ENCODE measurements at regions of chr4 and their contacts with region 1.

Region 1: DNA sequence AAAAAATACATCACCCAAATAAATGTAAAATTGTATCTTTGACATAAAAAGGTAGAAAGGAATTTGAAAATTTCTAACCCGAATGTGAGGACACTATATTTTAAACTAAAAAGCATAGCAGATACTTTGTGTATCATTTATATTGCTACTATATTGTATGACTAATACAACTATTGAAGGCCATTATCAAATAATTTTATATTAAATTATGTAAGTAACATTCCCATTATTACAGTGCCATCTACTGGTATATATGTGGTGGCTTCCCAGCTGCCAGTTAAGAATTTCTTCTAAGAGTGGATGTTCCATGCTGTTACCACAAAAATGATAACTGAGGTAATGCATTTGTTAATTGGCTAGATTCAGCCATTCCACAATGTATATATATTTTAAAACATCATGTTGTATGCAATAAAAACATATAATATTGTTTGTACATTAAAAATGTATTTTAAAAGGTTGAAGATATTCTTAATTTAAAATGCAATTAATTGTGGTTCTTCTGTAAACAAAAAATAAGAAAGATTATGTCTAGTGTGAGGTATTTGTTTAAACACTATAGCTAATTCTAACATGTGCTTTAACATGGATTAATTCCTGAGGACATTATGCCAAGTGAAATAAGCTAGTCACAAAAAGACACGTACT is 65.3 kb downstream of the EGF start:
- DNase-seq: peak; percentile 70
- H3K4me3 ChIP-seq: no peak overlapping the region
- H3K27ac ChIP-seq: no peak overlapping the region
- H3K4me1 ChIP-seq: peaks cover 7% of the 10 kb centered on the region
- H3K27me3 ChIP-seq: no peaks in the 10 kb centered on the region
- CTCF ChIP-seq: peak; percentile 81

Region 2: GRCh38 chr4:109424093-109424841 is 553.7 kb before region 1 on chr4:
- CTCF ChIA-PET with region 1: interaction called, 7 read pairs
- POLR2A ChIA-PET with region 1: no interaction called
- intact Hi-C with region 1: loop called (anchors 2 kb)
- DNase-seq: no peak
- H3K4me3 ChIP-seq: no peak overlapping the region
- H3K27ac ChIP-seq: no peak overlapping the region
- H3K4me1 ChIP-seq: peaks cover 8% of the 10 kb centered on the region
- H3K27me3 ChIP-seq: no peaks in the 10 kb centered on the region
- CTCF ChIP-seq: no peak

Region 3: GRCh38 chr4:109702950-109703663 is 274.9 kb before region 1 on chr4 and contains the start of gene CASP6:
- CTCF ChIA-PET with region 1: no interaction called
- POLR2A ChIA-PET with region 1: no interaction called
- intact Hi-C with region 1: loop called (anchors 10 kb)
- DNase-seq: peak; percentile 86
- H3K4me3 ChIP-seq: peak within 1 kb of the TSS; percentile 91
- H3K27ac ChIP-seq: peak within 1 kb of the TSS; percentile 90
- H3K4me1 ChIP-seq: peaks cover 17% of the 10 kb centered on the region
- H3K27me3 ChIP-seq: no peaks in the 10 kb centered on the region
- CTCF ChIP-seq: peak; percentile 75
- total RNA-seq, gene CASP6: 30.5 and 33.0 TPM in 2 replicates

Region 4: DNA sequence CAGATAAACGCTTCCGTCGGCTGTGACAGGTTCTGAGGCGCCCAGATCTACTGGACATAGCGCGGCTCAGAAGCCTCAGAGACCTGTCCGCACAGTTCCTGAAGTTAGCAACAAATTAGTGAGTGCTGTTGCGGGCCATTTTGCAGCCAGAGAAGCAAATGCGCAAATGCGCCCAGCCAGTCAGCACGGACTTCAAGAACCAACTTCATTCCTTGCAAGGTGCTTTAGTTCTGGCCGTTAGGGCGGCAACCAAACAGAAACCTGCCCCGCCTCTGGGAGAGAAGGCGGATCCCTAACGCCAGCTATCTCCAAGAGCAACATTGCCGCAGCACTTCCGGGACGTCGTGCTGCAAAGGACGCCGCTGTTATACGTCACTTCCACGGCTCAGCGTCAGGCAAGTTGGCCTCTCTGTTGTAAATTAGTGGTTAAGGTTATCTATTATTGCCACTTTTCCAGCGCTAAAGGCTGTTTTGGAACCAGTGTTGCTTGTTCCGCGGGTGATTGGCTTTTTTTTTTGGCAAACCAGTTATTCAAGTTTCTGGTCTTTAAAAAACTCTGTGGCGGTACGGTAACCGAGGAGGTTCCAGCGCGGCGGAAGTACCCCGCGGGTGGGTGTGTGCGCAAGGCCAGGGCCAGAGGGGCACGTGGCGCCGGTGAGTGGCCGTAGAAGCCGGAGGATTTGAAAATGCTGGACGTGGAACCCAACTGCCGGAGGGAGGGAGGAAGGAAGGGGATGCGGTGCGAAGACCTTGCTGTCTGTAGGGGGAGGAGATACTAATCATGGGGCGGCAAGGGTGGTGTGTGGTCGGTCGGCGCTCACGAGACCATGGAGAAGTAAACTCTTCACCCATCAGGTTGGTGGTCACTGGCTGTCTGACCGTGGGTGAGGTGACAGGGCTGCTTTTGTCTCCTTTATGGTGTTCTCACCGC is 162.6 kb before region 1 on chr4 and contains the start of gene GAR1:
- CTCF ChIA-PET with region 1: no interaction called
- POLR2A ChIA-PET with region 1: no interaction called
- intact Hi-C with region 1: loop called (anchors 5 kb)
- DNase-seq: peak; percentile 97
- H3K4me3 ChIP-seq: peak within 1 kb of the TSS; percentile 65
- H3K27ac ChIP-seq: peak within 1 kb of the TSS; percentile 88
- H3K4me1 ChIP-seq: peaks cover 10% of the 10 kb centered on the region
- H3K27me3 ChIP-seq: no peaks in the 10 kb centered on the region
- CTCF ChIP-seq: no peak
- total RNA-seq, gene GAR1: 56.0 and 67.6 TPM in 2 replicates

Measured in A673 (cell line).